RWPE1 (cell line): ENCODE measurements at regions of chr6 and their contacts with region 1.

Region 1: GRCh38 chr6:129393654-129394053 is 316.3 kb downstream of the ARHGAP18 start:
- DNase-seq: no peak
- H3K27ac ChIP-seq: no peak overlapping the region
- CTCF ChIP-seq: no peak

Region 2: GRCh38 chr6:129251669-129252376 is 141.8 kb before region 1 on chr6:
- CTCF ChIA-PET with region 1: interaction called, 10 read pairs
- POLR2A ChIA-PET with region 1: no interaction called
- DNase-seq: peak; percentile 44
- H3K27ac ChIP-seq: no peak overlapping the region
- CTCF ChIP-seq: peak; percentile 90

Region 3: DNA sequence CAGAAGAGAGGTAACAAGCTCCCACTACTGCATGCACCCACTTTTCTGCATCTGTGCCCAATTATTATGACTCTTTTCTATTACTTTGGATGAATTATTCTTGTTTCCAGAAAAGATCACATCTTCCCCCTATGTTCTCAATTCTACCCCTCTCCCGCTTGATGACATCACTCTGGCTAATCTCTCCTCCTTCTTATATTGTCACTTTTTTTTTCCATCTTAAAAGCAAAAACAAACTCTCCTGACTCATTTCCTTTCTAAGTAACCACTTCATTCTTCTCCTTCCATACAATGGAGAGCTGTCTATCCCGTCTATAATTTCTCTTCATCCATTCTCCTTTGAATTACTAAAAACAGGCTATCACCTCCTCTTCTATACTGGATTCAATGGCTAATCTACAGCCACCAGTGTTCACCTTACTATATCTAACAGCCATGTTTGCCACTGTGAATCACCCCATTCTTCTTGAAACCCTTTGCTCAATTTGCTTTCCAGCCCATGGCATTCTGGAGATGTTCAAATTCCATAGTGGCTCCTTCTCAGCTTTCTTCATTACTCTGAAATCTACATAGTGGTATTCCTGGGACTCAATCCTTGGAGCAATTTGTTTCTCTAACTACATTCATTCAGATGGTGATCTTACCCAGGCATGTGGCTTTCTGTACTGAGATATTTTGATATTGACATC is 62.1 kb before region 1 on chr6:
- CTCF ChIA-PET with region 1: no interaction called
- POLR2A ChIA-PET with region 1: no interaction called
- DNase-seq: no peak
- H3K27ac ChIP-seq: no peak overlapping the region
- CTCF ChIP-seq: no peak